BJ (cell line): ENCODE measurements at regions of chr12 and their contacts with region 1.

Region 1: GRCh38 chr12:114765960-114766691 is 82.2 kb upstream of the TBX3 start:
- DNase-seq: no peak
- H3K4me3 ChIP-seq: no peak overlapping the region
- H3K27me3 ChIP-seq: no peaks in the 10 kb centered on the region
- CTCF ChIP-seq: no peak

Region 2: DNA sequence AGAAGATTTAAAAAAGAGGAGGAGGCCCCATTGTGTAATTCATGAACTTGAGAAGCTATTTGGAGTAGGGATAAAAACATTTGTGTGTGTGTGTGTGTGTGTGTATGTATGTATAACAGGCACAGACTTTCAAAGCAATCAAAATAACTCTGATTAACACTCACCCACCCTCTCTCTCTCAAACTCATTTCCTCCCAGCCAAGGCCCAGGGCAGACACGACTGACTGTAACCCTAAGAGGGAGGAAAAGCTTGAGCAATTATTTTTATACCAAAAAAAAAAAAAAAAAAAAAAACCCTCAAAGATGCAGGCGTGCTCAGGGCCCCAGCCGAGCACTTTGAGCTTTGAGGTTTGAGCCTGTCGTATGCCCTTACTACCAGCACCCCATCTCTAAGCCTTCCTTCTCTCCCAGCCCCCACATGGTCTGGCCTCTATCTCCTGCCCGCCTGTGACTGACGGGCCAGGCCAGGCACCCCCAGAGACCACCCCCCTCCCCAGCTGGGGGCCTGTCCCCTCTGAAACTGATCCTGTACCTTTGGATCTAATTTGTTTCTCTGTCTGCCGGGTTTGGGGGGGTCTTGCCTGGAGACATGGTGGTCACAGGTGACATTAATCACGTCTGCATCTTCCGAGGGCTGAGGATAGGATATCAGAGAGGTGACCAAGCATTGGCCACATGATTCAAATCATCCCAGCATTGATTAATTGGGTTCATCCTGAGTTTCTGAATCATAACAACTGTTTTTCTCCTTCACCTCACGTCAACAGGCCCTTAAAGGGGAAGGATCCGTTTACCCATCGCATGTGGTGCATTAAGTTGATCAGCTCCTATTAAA is 19.2 kb before region 1 on chr12:
- CTCF ChIA-PET with region 1: no interaction called
- POLR2A ChIA-PET with region 1: interaction called, 12 read pairs
- DNase-seq: peak; percentile 63
- H3K4me3 ChIP-seq: no peak overlapping the region
- H3K27me3 ChIP-seq: no peaks in the 10 kb centered on the region
- CTCF ChIP-seq: no peak